Natural killer cell (primary cell): ENCODE measurements at regions of chr4 and their contacts with region 1.

Region 1: GRCh38 chr4:55546756-55547465 is at the start of gene CLOCK:
- DNase-seq: peak; percentile 81 to 92
- ATAC-seq: peak; percentile 74 to 84 (median 77)
- H3K4me3 ChIP-seq: peak within 1 kb of the TSS; percentile 79
- H3K4me3 Mint-ChIP-seq: peak within 1 kb of the TSS; percentile 93
- H3K27ac ChIP-seq: peak within 1 kb of the TSS; percentile 77
- H3K27ac Mint-ChIP-seq: peak within 1 kb of the TSS; percentile 87 to 89
- H3K4me1 ChIP-seq: no peaks in the 10 kb centered on the region
- H3K4me1 Mint-ChIP-seq: peaks cover 20 to 27% of the 10 kb centered on the region in 2 donors
- H3K27me3 ChIP-seq: no peaks in the 10 kb centered on the region
- H3K27me3 Mint-ChIP-seq: peaks cover 6 to 16% of the 10 kb centered on the region in 2 donors
- CTCF ChIP-seq: peak; percentile 34
- total RNA-seq, gene CLOCK: 11.4 to 15.8 (median 13.4) TPM

Region 2: DNA sequence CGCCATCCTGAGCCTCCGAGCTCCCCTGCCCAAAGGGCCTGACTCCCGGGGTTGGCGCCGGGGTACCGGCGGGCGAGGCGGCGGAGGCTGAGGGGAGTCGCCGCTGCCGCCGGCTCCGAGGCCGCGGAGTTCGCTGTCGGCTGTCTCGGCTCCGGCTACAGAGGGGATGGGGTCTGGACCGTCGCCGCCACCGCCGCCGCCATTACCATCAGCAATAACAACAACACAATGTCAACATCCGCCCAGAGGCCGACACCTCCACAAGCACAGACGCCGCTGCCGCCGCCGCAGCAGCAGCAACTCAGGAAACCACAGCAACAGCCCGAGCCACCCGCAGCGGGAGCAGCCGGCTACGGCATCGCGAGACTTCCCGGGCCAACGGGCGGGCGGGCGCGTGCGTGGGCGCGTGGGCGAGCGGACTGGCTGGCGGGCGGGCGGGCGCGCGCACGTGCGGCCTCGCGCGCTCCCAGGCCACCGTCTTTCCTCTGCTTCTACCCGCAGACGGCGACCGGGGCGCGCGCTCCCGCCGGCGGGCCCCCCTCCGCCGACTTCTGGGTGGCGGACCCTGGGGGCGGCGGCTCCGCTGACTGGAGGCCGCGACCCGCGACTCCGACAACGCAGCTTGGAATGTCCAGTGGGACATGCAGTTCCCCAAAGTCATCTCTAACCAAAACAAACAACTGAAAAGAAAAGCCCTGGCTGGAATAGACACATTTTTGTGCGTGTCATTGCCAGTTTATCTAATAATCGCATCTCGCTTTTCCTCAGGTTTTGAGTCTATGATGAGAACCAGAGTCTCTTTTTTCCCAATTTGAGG is 1482.4 kb before region 1 on chr4 and contains the start of gene CHIC2:
- intact Hi-C with region 1: loop called (anchors 5 kb)
- DNase-seq: peak; percentile 98 to 99
- ATAC-seq: peak; percentile 80 to 92 (median 90)
- H3K4me3 ChIP-seq: peak within 1 kb of the TSS; percentile 76
- H3K4me3 Mint-ChIP-seq: peak within 1 kb of the TSS; percentile 95
- H3K27ac ChIP-seq: peak within 1 kb of the TSS; percentile 88
- H3K27ac Mint-ChIP-seq: peak within 1 kb of the TSS; percentile 96 to 97
- H3K4me1 ChIP-seq: no peaks in the 10 kb centered on the region
- H3K4me1 Mint-ChIP-seq: peaks cover 51 to 53% of the 10 kb centered on the region in 2 donors
- H3K27me3 ChIP-seq: no peaks in the 10 kb centered on the region
- H3K27me3 Mint-ChIP-seq: no peaks in the 10 kb centered on the region
- CTCF ChIP-seq: no peak
- total RNA-seq, gene CHIC2: 62.0 to 85.0 (median 79.7) TPM

Region 3: DNA sequence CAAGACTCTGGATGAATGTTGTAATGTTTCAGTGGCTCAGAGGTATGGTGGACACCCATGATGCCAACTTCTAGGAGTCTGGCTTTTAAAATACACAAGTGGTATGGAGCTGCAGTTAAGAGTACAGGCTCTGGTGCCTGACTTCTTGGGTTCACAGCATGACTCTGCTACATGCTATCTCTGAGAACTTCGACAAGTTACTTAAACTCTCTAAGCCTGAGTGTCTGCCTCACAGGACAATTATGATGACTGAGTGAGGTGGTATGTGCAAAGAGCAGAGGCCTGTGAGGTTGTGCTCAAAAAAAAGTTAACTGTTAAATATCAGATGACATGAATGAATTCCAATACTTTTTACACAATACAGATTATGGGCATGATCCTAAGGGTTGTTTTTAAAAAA is 291.7 kb before region 1 on chr4:
- intact Hi-C with region 1: no loop called
- DNase-seq: no peak
- ATAC-seq: no peak
- H3K4me3 ChIP-seq: no peak overlapping the region
- H3K4me3 Mint-ChIP-seq: no peak overlapping the region
- H3K27ac ChIP-seq: no peak overlapping the region
- H3K27ac Mint-ChIP-seq: no peak overlapping the region
- H3K4me1 ChIP-seq: no peaks in the 10 kb centered on the region
- H3K4me1 Mint-ChIP-seq: no peaks in the 10 kb centered on the region
- H3K27me3 ChIP-seq: no peaks in the 10 kb centered on the region
- H3K27me3 Mint-ChIP-seq: peaks cover 7 to 23% of the 10 kb centered on the region in 2 donors
- CTCF ChIP-seq: no peak

Region 4: DNA sequence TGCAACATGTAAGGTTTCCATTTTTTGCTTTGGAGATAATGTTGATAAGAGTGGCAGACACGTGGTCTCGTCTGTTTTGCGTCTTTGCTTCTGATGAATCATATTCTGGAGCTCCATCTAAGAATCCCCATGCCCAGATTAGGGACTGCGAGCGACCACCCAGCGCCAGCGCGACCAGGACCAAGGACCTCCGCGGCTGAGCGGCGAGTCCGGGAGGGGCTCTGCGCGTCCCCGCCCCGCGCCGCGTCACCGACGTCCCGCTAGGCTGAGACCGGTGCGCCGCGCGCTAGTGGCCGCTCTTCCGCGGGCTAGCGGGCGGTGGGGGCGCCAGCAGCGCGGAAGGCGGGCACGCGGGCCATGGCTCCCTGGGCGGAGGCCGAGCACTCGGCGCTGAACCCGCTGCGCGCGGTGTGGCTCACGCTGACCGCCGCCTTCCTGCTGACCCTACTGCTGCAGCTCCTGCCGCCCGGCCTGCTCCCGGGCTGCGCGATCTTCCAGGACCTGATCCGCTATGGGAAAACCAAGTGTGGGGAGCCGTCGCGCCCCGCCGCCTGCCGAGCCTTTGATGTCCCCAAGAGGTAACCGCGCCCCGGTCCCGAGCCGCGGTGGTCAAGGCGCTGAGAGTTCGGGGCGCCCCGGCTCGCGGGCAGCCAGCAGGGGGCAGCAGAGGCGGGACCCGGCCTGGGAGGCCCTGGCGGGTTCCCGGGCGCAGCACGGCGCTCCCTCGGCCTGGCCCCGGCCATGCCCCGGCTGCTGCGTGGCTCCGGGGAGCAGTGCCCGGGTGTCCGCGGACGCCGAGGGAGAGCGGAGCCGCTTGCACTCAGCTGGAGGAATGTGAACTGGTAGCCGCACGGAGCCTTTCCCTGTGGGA is 200.7 kb before region 1 on chr4 and contains the start of gene SRD5A3:
- intact Hi-C with region 1: loop called (anchors 10 kb)
- DNase-seq: peak; percentile 80 to 85
- ATAC-seq: peak; percentile 89 to 95 (median 89)
- H3K4me3 ChIP-seq: peak within 1 kb of the TSS; percentile 77
- H3K4me3 Mint-ChIP-seq: peak within 1 kb of the TSS; percentile 94
- H3K27ac ChIP-seq: peak within 1 kb of the TSS; percentile 87
- H3K27ac Mint-ChIP-seq: peak within 1 kb of the TSS; percentile 82 to 87
- H3K4me1 ChIP-seq: peaks cover 9% of the 10 kb centered on the region
- H3K4me1 Mint-ChIP-seq: peaks cover 0 to 10% of the 10 kb centered on the region in 2 donors
- H3K27me3 ChIP-seq: no peaks in the 10 kb centered on the region
- H3K27me3 Mint-ChIP-seq: no peaks in the 10 kb centered on the region
- CTCF ChIP-seq: peak; percentile 99
- total RNA-seq, gene SRD5A3: 3.5 to 5.6 (median 4.5) TPM

Region 5: GRCh38 chr4:55395529-55396307 is 151.2 kb before region 1 on chr4 and contains the start of gene TMEM165:
- intact Hi-C with region 1: loop called (anchors 1 kb)
- DNase-seq: peak; percentile 83 to 93
- ATAC-seq: peak; percentile 86 to 93 (median 90)
- H3K4me3 ChIP-seq: peak within 1 kb of the TSS; percentile 71
- H3K4me3 Mint-ChIP-seq: peak within 1 kb of the TSS; percentile 97
- H3K27ac ChIP-seq: peak within 1 kb of the TSS; percentile 92
- H3K27ac Mint-ChIP-seq: peak within 1 kb of the TSS; percentile 95 to 97
- H3K4me1 ChIP-seq: peaks cover 23% of the 10 kb centered on the region
- H3K4me1 Mint-ChIP-seq: peaks cover 39% of the 10 kb centered on the region in 2 donors
- H3K27me3 ChIP-seq: no peaks in the 10 kb centered on the region
- H3K27me3 Mint-ChIP-seq: no peaks in the 10 kb centered on the region
- CTCF ChIP-seq: no peak
- total RNA-seq, gene TMEM165: 86.9 to 113 (median 102) TPM

Region 6: DNA sequence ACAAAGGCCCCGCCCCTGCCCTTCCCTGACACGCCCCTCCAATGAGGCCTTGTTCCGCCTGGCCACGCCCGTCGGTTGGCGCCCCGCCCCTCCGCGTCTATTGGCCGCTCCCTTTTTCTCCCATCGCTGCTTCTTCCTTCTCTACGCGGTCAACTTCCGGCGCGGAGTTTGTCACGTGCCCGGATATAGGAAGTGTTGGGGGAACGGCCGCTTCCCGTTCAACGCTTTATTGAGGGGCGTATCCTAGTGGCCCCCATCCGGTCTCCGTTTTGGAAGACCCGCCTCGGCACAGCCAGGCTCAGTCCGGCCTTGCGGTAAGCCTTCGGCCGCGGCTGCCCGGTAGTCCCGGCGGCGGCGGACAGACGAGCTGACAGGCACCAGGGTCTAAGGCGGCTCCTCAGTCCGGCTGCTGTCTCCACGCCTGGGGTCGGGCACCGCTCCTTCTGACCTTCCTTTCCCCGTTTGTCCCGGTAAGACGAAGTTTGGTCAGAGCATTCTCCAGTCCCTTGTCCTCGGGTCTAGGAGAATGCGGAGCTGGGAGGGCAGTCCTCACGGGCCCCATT is 306.7 kb after region 1 on chr4 and contains the start of gene EXOC1:
- intact Hi-C with region 1: loop called (anchors 5 kb)
- DNase-seq: peak; percentile 88 to 97
- ATAC-seq: peak; percentile 94 to 96 (median 95)
- H3K4me3 ChIP-seq: peak within 1 kb of the TSS; percentile 98
- H3K4me3 Mint-ChIP-seq: peak within 1 kb of the TSS; percentile 45
- H3K27ac ChIP-seq: peak within 1 kb of the TSS; percentile 73
- H3K27ac Mint-ChIP-seq: peak within 1 kb of the TSS in 1 of 2 donors; percentile 91
- H3K4me1 ChIP-seq: peaks cover 14% of the 10 kb centered on the region
- H3K4me1 Mint-ChIP-seq: peaks cover 17 to 20% of the 10 kb centered on the region in 2 donors
- H3K27me3 ChIP-seq: no peaks in the 10 kb centered on the region
- H3K27me3 Mint-ChIP-seq: peaks cover 0 to 10% of the 10 kb centered on the region in 2 donors
- CTCF ChIP-seq: no peak
- total RNA-seq, gene EXOC1: 16.3 to 25.8 (median 20.9) TPM

Region 7: GRCh38 chr4:56655209-56655626 is 1108.3 kb after region 1 on chr4:
- intact Hi-C with region 1: loop called (anchors 5 kb)
- DNase-seq: peak in 1 of 2 donors; percentile 53
- ATAC-seq: peak in 2 of 3 donors; percentile 16 to 31
- H3K4me3 ChIP-seq: peak overlapping the region; percentile 66
- H3K4me3 Mint-ChIP-seq: peak overlapping the region; percentile 94
- H3K27ac ChIP-seq: peak overlapping the region; percentile 73
- H3K27ac Mint-ChIP-seq: peak overlapping the region; percentile 95 to 98
- H3K4me1 ChIP-seq: peaks cover 59% of the 10 kb centered on the region
- H3K4me1 Mint-ChIP-seq: peaks cover 74 to 76% of the 10 kb centered on the region in 2 donors
- H3K27me3 ChIP-seq: no peaks in the 10 kb centered on the region
- H3K27me3 Mint-ChIP-seq: no peaks in the 10 kb centered on the region
- CTCF ChIP-seq: no peak

Region 8: GRCh38 chr4:56907489-56908205 is 1360.7 kb after region 1 on chr4 and contains the start of gene REST:
- intact Hi-C with region 1: loop called (anchors 5 kb)
- DNase-seq: peak; percentile 88 to 91
- ATAC-seq: peak; percentile 67 to 88 (median 71)
- H3K4me3 ChIP-seq: peak within 1 kb of the TSS; percentile 95
- H3K4me3 Mint-ChIP-seq: peak within 1 kb of the TSS; percentile 94
- H3K27ac ChIP-seq: peak within 1 kb of the TSS; percentile 58
- H3K27ac Mint-ChIP-seq: peak within 1 kb of the TSS; percentile 91 to 93
- H3K4me1 ChIP-seq: peaks cover 22% of the 10 kb centered on the region
- H3K4me1 Mint-ChIP-seq: peaks cover 32 to 40% of the 10 kb centered on the region in 2 donors
- H3K27me3 ChIP-seq: no peaks in the 10 kb centered on the region
- H3K27me3 Mint-ChIP-seq: no peaks in the 10 kb centered on the region
- CTCF ChIP-seq: no peak
- total RNA-seq, gene REST: 52.1 to 71.3 (median 67.6) TPM